ENCODE measurements at regions of chr10 and their contacts with region 1.

Region 1: DNA sequence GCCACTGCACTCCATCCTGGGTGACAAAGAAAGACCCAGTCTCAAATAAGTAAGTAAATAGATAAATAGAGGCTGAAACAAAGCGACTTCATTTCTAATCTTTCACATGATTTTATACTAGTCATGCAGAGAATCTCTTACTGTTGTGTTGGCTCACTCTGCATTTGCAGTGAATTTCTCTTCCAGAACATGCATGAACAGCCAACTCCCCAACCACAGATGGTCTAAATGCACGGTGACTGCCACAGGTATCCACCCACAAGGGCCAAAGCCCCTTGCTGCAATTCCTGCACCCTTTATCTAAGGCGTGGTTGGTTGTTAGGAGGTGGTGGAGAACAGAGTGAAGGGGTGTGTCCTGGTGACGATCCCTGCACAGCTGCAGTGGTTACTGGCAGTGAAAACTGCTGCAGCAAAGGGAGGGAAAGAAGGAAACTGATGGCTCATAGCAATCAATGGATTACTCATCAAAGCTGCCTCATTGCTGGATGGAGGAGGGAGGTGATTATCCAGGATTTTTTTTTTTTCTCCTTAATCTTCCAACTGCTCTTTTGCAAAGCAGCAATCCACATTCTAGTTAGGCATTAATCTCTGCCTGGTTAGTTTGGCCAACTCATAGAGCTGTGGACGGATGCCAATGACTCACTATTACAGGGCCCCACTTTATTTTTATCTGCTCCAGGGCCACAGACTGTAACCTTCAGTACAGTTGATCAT is 50.6 kb downstream of the PRTFDC1 start:
- DNase-seq: peak; percentile 37
- H3K4me3 Mint-ChIP-seq: no peak overlapping the region
- H3K27ac Mint-ChIP-seq: no peak overlapping the region
- H3K4me1 Mint-ChIP-seq: peaks cover 33% of the 10 kb centered on the region
- H3K27me3 Mint-ChIP-seq: peaks cover 2% of the 10 kb centered on the region

Region 2: DNA sequence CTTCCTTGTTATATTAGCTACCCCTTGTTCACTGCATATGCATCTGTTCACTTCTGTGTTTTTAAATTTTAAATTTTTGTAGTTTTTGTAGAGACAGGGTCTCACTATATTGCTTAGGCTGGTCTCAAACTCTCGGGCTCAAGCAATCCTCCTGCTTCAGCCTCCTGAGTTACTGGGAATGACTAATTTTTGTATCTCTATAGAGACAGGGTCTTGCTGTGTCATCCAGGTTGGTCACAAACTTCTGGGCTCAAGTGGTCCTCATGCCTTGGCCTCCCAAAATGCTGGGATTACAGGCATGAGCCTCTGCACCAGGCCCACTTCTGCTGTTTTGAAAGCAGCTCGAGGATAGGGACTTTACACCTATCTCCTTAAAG is 14.0 kb before region 1 on chr10:
- CTCF ChIA-PET with region 1: interaction called, 9 read pairs
- intact Hi-C with region 1: loop called (anchors 1 kb)
- DNase-seq: no peak
- H3K4me3 Mint-ChIP-seq: no peak overlapping the region
- H3K27ac Mint-ChIP-seq: no peak overlapping the region
- H3K4me1 Mint-ChIP-seq: peaks cover 41% of the 10 kb centered on the region
- H3K27me3 Mint-ChIP-seq: no peaks in the 10 kb centered on the region

Region 3: DNA sequence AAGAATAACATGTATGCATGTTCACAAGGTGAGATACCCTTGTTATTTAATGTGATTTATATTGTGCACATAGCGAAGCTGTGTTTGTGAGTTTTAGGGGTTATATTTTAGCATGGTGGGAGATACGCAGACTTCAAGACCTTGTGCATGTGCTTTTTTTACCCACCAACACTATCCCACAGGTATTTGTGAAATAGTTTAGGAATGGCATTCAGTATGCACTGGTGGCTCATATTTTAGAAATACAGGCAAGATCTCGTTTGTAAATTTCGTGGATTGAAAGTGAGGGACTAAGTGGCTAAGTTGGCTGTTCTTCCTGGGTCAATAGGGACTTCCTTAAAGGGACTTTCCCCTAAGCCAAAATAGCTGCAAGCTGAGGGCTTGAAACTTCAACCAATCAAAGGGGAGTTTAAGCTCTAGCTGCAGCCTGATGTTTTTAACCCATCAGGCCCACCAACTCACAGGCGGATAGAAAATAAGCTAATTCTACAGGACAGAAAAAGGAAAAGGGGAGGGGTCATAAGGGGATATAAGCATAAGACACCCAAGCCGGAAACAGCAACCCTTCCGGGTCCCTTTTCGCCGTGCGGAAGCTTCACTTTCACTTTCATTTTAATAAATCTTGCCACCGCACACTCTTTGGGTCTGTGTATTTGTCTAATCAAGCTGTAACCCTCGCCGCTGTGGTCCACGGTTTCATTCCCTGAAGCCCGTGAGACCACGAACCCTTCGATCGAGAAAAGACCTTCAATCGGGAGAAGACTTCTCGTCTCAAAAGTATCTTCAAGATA is 563.9 kb after region 1 on chr10:
- CTCF ChIA-PET with region 1: no interaction called
- intact Hi-C with region 1: no loop called
- DNase-seq: no peak
- H3K4me3 Mint-ChIP-seq: no peak overlapping the region
- H3K27ac Mint-ChIP-seq: no peak overlapping the region
- H3K4me1 Mint-ChIP-seq: no peaks in the 10 kb centered on the region
- H3K27me3 Mint-ChIP-seq: no peaks in the 10 kb centered on the region

Measured in activated naive CD4-positive, alpha-beta T cell treated with anti-CD3 and anti-CD28 coated beads for 36 hours (primary cell).